ENCODE measurements at regions of chr22 and their contacts with region 1.

Region 1: GRCh38 chr22:31107178-31107893 is at the start of gene SELENOM:
- DNase-seq: peak; percentile 94
- H3K4me3 Mint-ChIP-seq: peak within 1 kb of the TSS; percentile 79
- H3K27ac Mint-ChIP-seq: no peak within 1 kb of the TSS
- H3K4me1 Mint-ChIP-seq: peaks cover 16% of the 10 kb centered on the region
- H3K27me3 Mint-ChIP-seq: peaks cover 24% of the 10 kb centered on the region

Region 2: GRCh38 chr22:31148953-31149627 is 41.8 kb after region 1 on chr22:
- CTCF ChIA-PET with region 1: interaction called, 13 read pairs
- DNase-seq: peak; percentile 55
- H3K4me3 Mint-ChIP-seq: no peak overlapping the region
- H3K27ac Mint-ChIP-seq: no peak overlapping the region
- H3K4me1 Mint-ChIP-seq: peaks cover 6% of the 10 kb centered on the region
- H3K27me3 Mint-ChIP-seq: peaks cover 35% of the 10 kb centered on the region

Region 3: GRCh38 chr22:31199183-31199582 is 91.8 kb after region 1 on chr22:
- CTCF ChIA-PET with region 1: no interaction called
- DNase-seq: no peak
- H3K4me3 Mint-ChIP-seq: no peak overlapping the region
- H3K27ac Mint-ChIP-seq: no peak overlapping the region
- H3K4me1 Mint-ChIP-seq: peaks cover 8% of the 10 kb centered on the region
- H3K27me3 Mint-ChIP-seq: no peaks in the 10 kb centered on the region

Measured in activated naive CD4-positive, alpha-beta T cell treated with anti-CD3 and anti-CD28 coated beads, Interleukin-2, amount 10 ng/mL, durations not matched to agents 7 days and 5 days (primary cell).